ENCODE measurements at regions of chr16 and their contacts with region 1.

Region 1: GRCh38 chr16:57863434-57864160 is 61.3 kb upstream of the KIFC3 start:
- DNase-seq: peak; percentile 65 to 86
- ATAC-seq: peak; percentile 89 to 90
- H3K4me3 ChIP-seq: peak overlapping the region; percentile 51
- H3K27ac ChIP-seq: peak overlapping the region; percentile 93 to 95
- H3K4me1 ChIP-seq: peaks cover 83% of the 10 kb centered on the region
- CTCF ChIP-seq: peak; percentile 72
- EP300 ChIP-seq: no peak
- POLR2A ChIP-seq: no peak
- RAD21 ChIP-seq: peak; percentile 88 to 89

Region 2: GRCh38 chr16:57802341-57803133 is 61.1 kb before region 1 on chr16 and contains the start of gene KIFC3:
- CTCF ChIA-PET with region 1: interaction called, 164 read pairs
- POLR2A ChIA-PET with region 1: interaction called, 8 read pairs
- DNase-seq: peak in 1 of 2 experiments; percentile 86
- ATAC-seq: peak; percentile 2 to 49
- H3K4me3 ChIP-seq: peak within 1 kb of the TSS; percentile 53
- H3K27ac ChIP-seq: peak within 1 kb of the TSS; percentile 91 to 100
- H3K4me1 ChIP-seq: peaks cover 57% of the 10 kb centered on the region
- CTCF ChIP-seq: peak; percentile 39
- EP300 ChIP-seq: peak in 1 of 2 experiments; percentile 7; a peak in 1 of 5 replicates
- POLR2A ChIP-seq: no peak; the same call in 1 of the 2 replicates
- RAD21 ChIP-seq: no peak; a peak in 2 of 5 replicates
- polyA plus RNA-seq, gene KIFC3: 127 and 128 TPM in 2 replicates

Region 3: DNA sequence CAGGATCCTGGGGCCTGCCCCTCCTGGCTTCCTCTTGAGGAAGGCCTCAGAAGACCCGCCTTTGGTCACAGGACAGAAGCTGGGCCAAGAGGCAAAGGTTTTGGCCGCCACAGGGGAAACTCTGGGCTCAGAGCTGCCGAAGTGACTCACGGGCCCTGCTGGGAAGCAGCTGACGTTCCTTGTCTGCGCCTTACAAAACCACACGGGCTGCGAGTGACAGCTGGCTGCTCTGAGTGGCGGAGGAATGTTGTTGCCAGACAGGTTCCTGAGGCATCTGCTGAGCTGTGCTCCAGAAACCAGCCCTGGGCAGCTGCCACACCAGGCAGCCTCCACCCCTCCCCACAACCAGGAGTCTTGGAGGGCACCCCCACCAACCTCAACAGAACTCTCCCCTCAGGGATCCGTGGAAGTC is 47.3 kb before region 1 on chr16:
- CTCF ChIA-PET with region 1: interaction called, 14 read pairs
- POLR2A ChIA-PET with region 1: interaction called, 5 read pairs
- DNase-seq: peak; percentile 62 to 81
- ATAC-seq: peak; percentile 72 to 79
- H3K4me3 ChIP-seq: no peak overlapping the region
- H3K27ac ChIP-seq: peak overlapping the region; percentile 77 to 97
- H3K4me1 ChIP-seq: peaks cover 76% of the 10 kb centered on the region
- CTCF ChIP-seq: no peak
- EP300 ChIP-seq: peak in 1 of 2 experiments; percentile 57; a peak in 1 of 5 replicates
- POLR2A ChIP-seq: no peak
- RAD21 ChIP-seq: 0 out of 5 replicates have a peak, but pooled peaks of 1 of the 2 experiments have one; percentile 15

Region 4: DNA sequence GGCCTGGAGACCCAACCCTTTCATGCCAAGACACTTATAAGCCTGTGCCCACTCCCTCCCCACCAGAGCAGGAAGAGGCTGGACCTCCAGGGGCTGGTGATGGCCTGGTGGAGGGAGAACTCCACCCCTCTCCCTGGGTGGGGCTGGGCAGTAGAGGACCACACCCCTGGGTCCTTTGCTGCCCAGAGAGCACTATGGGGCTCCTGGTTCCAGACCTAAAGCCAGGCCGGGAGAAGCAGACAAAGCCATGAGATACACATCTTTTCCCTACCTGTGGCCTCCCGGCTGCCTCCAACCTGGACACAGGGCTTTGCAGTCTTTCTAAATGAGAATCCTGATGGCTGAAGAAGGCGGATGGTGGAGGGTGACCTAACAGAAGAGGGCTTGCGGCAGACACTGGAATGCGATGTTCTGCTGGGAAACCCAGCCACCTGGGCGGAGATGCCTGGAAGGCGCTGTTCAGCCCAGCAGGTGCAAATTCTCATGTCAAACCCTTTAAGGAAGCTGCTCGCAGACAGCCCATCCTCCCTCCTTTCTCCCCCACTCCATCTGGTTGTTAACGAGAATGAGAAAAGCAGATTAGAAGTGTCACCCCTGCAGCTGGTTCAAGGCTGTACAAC is 17.4 kb before region 1 on chr16:
- CTCF ChIA-PET with region 1: interaction called, 21 read pairs
- POLR2A ChIA-PET with region 1: interaction called, 3 read pairs
- DNase-seq: no peak
- ATAC-seq: peak in 1 of 2 experiments; percentile 64; a peak in 3 of 6 replicates
- H3K4me3 ChIP-seq: no peak overlapping the region
- H3K27ac ChIP-seq: peak overlapping the region in 1 of 2 experiments; percentile 47; a peak in 3 of 6 replicates
- H3K4me1 ChIP-seq: peaks cover 22% of the 10 kb centered on the region; the same call in 2 of the 3 replicates
- CTCF ChIP-seq: no peak
- EP300 ChIP-seq: no peak
- POLR2A ChIP-seq: no peak
- RAD21 ChIP-seq: no peak

Region 5: GRCh38 chr16:58000706-58001676 is 137.4 kb after region 1 on chr16 and contains the start of gene USB1:
- CTCF ChIA-PET with region 1: interaction called, 14 read pairs
- POLR2A ChIA-PET with region 1: interaction called, 4 read pairs
- DNase-seq: peak; percentile 91 to 97
- ATAC-seq: peak; percentile 84 to 93
- H3K4me3 ChIP-seq: peak within 1 kb of the TSS; percentile 99
- H3K27ac ChIP-seq: peak within 1 kb of the TSS; percentile 98
- H3K4me1 ChIP-seq: peaks cover 41% of the 10 kb centered on the region
- CTCF ChIP-seq: peak; percentile 77
- EP300 ChIP-seq: no peak
- POLR2A ChIP-seq: peak; percentile 90
- RAD21 ChIP-seq: peak; percentile 48 to 89; a peak in 4 of 5 replicates
- polyA plus RNA-seq, gene USB1: 88.2 and 88.8 TPM in 2 replicates